Caco-2 (cell line): ENCODE measurements at regions of chr4 and their contacts with region 1.

Region 1: GRCh38 chr4:31045724-31046318 is 325.7 kb downstream of the PCDH7 start:
- DNase-seq: peak in 1 of 2 experiments; percentile 34
- H3K4me3 ChIP-seq: no peak overlapping the region
- H3K4me3 Mint-ChIP-seq: peak overlapping the region; percentile 23
- H3K27ac Mint-ChIP-seq: no peak overlapping the region
- H3K4me1 ChIP-seq: peaks cover 36% of the 10 kb centered on the region
- H3K4me1 Mint-ChIP-seq: peaks cover 36% of the 10 kb centered on the region
- H3K27me3 ChIP-seq: no peaks in the 10 kb centered on the region
- H3K27me3 Mint-ChIP-seq: no peaks in the 10 kb centered on the region
- CTCF ChIP-seq: peak; percentile 38 to 48

Region 2: DNA sequence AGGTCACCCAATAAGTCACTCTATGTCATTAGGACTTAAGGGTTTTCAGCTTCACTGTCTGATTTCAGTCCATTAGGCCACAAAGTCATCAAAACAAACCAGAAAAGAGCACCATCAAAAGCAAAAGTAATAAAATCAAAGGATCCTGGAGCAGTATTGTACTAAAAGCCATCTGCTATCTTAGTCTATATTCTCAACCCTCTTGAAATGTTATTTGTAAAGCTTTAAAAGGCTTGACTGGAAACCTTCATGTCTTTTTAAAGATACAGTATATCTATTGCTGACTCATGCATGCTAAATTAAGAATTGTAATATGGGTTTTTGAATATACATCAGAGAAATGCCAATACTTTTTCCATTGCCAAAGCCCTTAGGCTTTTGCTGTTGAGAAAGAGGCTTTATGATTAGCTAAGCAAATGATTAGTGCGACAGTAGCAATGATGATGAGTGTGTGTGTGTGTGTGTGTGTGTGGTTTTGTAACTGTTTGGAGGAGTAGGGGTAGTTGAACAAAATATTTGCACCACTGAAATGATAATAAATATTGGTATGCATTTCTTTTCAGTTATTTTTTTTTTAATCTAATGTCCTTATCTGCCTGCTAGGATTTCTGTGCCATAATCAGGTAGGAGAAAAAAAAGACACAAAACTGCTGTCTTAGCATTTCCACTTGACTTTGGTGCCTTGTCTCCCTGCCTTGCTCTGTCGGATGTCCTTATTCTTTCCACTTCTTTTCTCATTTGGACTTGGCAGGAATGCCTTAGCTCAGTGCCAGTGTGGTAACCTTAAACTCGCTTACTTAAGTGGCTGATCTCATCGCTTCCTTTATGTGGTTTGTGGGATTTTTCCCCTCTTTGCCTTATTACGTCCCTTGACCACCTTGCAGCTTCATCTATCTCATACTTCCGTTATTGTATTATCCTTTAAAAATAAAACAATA is 206.0 kb before region 1 on chr4:
- CTCF ChIA-PET with region 1: no interaction called
- POLR2A ChIA-PET with region 1: no interaction called
- intact Hi-C with region 1: loop called (anchors 1 kb)
- DNase-seq: no peak
- H3K4me3 ChIP-seq: no peak overlapping the region
- H3K4me3 Mint-ChIP-seq: no peak overlapping the region
- H3K27ac Mint-ChIP-seq: no peak overlapping the region
- H3K4me1 ChIP-seq: peaks cover 58% of the 10 kb centered on the region
- H3K4me1 Mint-ChIP-seq: peaks cover 40% of the 10 kb centered on the region
- H3K27me3 ChIP-seq: no peaks in the 10 kb centered on the region
- H3K27me3 Mint-ChIP-seq: no peaks in the 10 kb centered on the region
- CTCF ChIP-seq: no peak

Region 3: GRCh38 chr4:30950737-30951136 is 95.1 kb before region 1 on chr4:
- CTCF ChIA-PET with region 1: no interaction called
- POLR2A ChIA-PET with region 1: no interaction called
- intact Hi-C with region 1: loop called (anchors 2 kb)
- DNase-seq: peak; percentile 25 to 71
- H3K4me3 ChIP-seq: no peak overlapping the region
- H3K4me3 Mint-ChIP-seq: no peak overlapping the region
- H3K27ac Mint-ChIP-seq: peak overlapping the region; percentile 33
- H3K4me1 ChIP-seq: peaks cover 58% of the 10 kb centered on the region
- H3K4me1 Mint-ChIP-seq: peaks cover 39% of the 10 kb centered on the region
- H3K27me3 ChIP-seq: no peaks in the 10 kb centered on the region
- H3K27me3 Mint-ChIP-seq: no peaks in the 10 kb centered on the region
- CTCF ChIP-seq: no peak

Region 4: DNA sequence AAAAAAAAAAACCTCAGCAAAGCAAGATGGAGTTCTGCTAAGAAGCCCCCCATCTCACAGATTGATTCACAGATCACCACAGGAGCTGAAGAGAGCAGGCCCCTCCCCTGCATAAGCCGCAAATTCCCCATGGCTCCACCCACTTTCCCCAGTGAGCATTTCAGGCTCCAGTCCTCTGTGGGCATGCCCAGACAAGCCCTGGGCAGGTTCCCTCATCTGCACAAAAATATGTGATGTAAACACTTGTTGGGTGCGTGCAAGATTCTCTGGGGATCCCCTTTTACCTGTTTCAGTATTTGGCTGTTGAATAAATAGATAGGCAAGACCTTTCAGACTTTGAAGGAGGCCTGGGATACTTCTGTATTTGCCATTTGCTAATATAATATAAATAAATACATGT is 188.7 kb after region 1 on chr4:
- CTCF ChIA-PET with region 1: no interaction called
- POLR2A ChIA-PET with region 1: no interaction called
- intact Hi-C with region 1: loop called (anchors 2 kb)
- DNase-seq: peak; percentile 53 to 74
- H3K4me3 ChIP-seq: no peak overlapping the region
- H3K4me3 Mint-ChIP-seq: no peak overlapping the region
- H3K27ac Mint-ChIP-seq: no peak overlapping the region
- H3K4me1 ChIP-seq: peaks cover 10% of the 10 kb centered on the region
- H3K4me1 Mint-ChIP-seq: no peaks in the 10 kb centered on the region
- H3K27me3 ChIP-seq: no peaks in the 10 kb centered on the region
- H3K27me3 Mint-ChIP-seq: no peaks in the 10 kb centered on the region
- CTCF ChIP-seq: no peak

Region 5: DNA sequence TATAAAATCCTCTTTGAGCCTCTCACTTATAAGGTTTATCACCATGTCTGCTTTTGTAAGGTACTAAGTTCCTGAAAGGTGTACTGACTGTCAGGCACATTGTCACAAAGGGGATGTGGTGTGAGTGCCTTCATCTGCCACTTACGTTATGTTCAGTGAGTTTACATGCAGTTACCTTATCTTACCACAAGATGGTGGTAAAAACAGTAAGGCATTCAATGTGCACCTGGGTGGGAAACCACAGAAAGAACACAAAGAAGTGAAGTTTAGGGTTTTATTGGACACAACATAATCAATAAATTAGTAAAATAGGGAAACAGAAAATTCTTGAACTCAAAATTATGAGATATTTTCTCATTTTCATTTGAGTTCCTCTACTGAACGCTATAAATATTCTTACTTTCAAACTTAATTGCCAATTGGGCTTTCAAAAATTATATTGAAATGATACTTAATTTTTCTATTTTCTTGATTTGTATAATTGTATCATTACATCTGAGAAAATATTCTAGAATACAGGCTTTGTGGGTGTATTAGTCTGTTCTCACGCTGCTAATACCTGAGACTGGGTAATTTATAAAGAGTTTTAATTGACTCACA is 325.1 kb after region 1 on chr4:
- CTCF ChIA-PET with region 1: no interaction called
- POLR2A ChIA-PET with region 1: no interaction called
- intact Hi-C with region 1: loop called (anchors 5 kb)
- DNase-seq: peak in 1 of 2 experiments; percentile 58
- H3K4me3 ChIP-seq: no peak overlapping the region
- H3K4me3 Mint-ChIP-seq: no peak overlapping the region
- H3K27ac Mint-ChIP-seq: no peak overlapping the region
- H3K4me1 ChIP-seq: 0 out of 2 replicates have a peak, but pooled peaks cover 1% of the 10 kb centered on the region
- H3K4me1 Mint-ChIP-seq: peaks cover 2% of the 10 kb centered on the region
- H3K27me3 ChIP-seq: no peaks in the 10 kb centered on the region
- H3K27me3 Mint-ChIP-seq: no peaks in the 10 kb centered on the region
- CTCF ChIP-seq: peak; percentile 56 to 73

Region 6: GRCh38 chr4:31674313-31674947 is 628.6 kb after region 1 on chr4:
- CTCF ChIA-PET with region 1: no interaction called
- POLR2A ChIA-PET with region 1: no interaction called
- intact Hi-C with region 1: loop called (anchors 5 kb)
- DNase-seq: peak; percentile 29 to 35
- H3K4me3 ChIP-seq: no peak overlapping the region
- H3K4me3 Mint-ChIP-seq: no peak overlapping the region
- H3K27ac Mint-ChIP-seq: no peak overlapping the region
- H3K4me1 ChIP-seq: no peaks in the 10 kb centered on the region
- H3K4me1 Mint-ChIP-seq: no peaks in the 10 kb centered on the region
- H3K27me3 ChIP-seq: no peaks in the 10 kb centered on the region
- H3K27me3 Mint-ChIP-seq: no peaks in the 10 kb centered on the region
- CTCF ChIP-seq: peak; percentile 43 to 46